ENCODE measurements at regions of chr12 and their contacts with region 1.

Region 1: DNA sequence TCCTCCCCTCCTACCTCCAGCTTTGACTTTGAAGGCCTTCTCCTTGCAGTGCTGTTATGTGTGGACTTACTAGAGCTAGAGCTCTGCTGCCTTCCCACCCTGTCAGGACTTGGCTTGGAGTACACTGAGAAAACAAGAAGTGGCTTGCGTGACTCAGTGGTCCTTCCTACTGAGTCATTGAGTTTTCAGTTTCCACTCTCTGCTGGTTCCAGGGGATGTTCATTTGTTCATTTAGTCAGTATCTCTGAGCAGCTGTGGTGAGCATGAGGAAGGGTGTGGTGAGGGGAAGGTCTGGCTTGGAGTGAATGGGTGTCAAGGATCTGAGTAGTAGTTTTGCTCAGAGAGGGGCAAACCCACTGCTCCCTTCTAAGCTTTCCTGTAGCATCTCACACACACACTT is 17.2 kb upstream of the ELK3 start:
- DNase-seq: peak; percentile 90
- ATAC-seq: peak; percentile 95
- H3K4me3 Mint-ChIP-seq: no peak overlapping the region
- H3K27ac Mint-ChIP-seq: peak overlapping the region; percentile 82
- H3K4me1 Mint-ChIP-seq: peaks cover 20% of the 10 kb centered on the region
- H3K27me3 Mint-ChIP-seq: peaks cover 8% of the 10 kb centered on the region

Region 2: GRCh38 chr12:96083020-96083719 is 93.8 kb before region 1 on chr12:
- CTCF ChIA-PET with region 1: no interaction called
- DNase-seq: no peak
- ATAC-seq: no peak
- H3K4me3 Mint-ChIP-seq: no peak overlapping the region
- H3K27ac Mint-ChIP-seq: no peak overlapping the region
- H3K4me1 Mint-ChIP-seq: peaks cover 2% of the 10 kb centered on the region
- H3K27me3 Mint-ChIP-seq: no peaks in the 10 kb centered on the region

Region 3: GRCh38 chr12:96156211-96156610 is 20.8 kb before region 1 on chr12:
- CTCF ChIA-PET with region 1: no interaction called
- DNase-seq: no peak
- ATAC-seq: no peak
- H3K4me3 Mint-ChIP-seq: no peak overlapping the region
- H3K27ac Mint-ChIP-seq: no peak overlapping the region
- H3K4me1 Mint-ChIP-seq: no peaks in the 10 kb centered on the region
- H3K27me3 Mint-ChIP-seq: no peaks in the 10 kb centered on the region

Region 4: DNA sequence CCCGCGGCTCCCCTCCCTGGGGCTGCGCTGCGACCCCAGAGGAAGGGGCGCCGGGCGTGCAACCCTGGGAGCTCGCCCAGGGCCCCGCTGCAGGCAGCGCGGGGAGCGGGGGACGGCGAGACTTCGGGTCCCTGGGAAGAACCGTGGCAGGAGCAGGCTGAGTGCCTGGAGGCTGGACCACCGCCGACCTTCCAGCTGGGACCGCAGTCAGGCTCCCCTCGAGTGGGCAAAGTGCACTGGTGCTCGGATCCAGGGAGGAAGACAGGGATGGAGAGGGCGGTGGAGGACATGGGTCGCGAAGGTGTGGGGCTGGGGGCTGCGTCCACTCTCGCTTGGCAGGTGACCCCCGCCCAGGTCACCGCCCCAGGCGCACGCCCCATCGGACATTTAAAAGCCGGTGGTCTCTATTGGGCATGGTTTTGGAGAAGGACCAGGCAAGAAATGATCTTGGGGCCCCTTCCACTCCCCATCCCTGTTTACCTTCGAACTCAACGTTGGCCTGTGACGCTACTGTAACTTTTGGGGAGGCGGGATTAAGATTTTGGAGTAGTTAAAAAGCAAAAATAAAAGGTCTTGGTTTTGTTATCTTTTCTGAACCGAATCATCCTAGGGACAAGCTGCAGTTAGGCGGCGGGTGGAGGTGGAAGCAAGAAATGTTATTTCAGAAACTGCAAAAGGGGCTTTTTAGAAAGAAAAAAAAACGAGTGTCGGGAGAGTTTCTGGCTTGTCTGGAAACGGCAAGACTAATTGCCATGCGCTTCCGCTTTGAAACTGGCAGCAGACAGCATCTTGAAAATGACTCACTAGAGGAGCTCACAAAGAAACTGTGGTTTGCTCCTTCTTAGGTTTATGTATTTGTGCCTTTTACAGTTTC is 18.2 kb after region 1 on chr12:
- CTCF ChIA-PET with region 1: interaction called, 15 read pairs
- DNase-seq: peak; percentile 85
- ATAC-seq: peak; percentile 74
- H3K4me3 Mint-ChIP-seq: peak overlapping the region; percentile 97
- H3K27ac Mint-ChIP-seq: peak overlapping the region; percentile 97
- H3K4me1 Mint-ChIP-seq: peaks cover 40% of the 10 kb centered on the region
- H3K27me3 Mint-ChIP-seq: no peaks in the 10 kb centered on the region